ENCODE measurements at regions of chr13 and their contacts with region 1.

Region 1: DNA sequence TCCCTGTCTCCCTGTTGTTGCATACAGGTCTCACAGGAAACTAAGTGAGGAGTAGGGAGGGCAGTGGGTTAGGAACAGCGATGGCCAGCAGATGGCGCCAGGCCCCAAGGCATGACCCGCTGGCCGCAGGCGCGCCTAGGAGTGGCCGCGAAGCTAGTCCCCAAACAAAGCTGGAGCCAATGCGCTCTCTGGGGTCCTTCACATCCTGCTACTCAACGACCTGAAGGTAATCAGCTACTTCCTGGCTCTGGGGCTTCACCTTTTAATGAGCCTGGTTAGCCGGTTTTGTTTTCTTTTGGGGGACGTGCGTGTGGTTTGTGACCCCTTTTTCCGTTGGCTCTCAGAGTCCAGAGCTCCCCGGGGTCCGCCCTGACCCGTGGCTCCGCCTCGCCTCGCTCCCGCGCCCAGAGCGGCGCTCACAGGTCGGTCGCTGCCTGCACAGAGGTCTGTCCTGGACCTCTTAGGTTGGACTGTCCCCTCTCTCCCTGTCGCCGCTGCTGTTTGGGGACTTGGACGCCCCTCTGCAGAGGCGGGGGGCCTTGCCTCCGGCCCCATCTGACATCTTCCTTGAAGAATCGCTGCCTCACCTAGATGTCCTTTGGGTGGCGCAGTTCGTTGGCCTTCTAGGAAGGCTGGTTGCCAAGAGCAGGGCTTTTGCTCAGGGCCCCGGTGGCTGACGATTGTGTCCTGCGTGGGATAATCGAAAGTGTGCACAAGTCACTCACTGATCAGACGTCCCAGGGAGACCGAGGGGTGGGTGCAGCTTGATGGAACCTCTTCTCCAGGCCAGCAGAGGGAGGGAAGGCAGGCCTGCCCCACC is 62.1 kb upstream of the GTF3A start:
- DNase-seq: peak; percentile 68
- H3K4me3 ChIP-seq: peak overlapping the region; percentile 26 to 42 (median 42)
- H3K27ac ChIP-seq: no peak overlapping the region
- H3K4me1 ChIP-seq: peaks cover 5% of the 10 kb centered on the region
- H3K27me3 ChIP-seq: no peaks in the 10 kb centered on the region
- CTCF ChIP-seq: peak; percentile 91 to 95

Region 2: GRCh38 chr13:26707122-26708006 is 654.9 kb before region 1 on chr13:
- CTCF ChIA-PET with region 1: no interaction called
- dilution Hi-C with region 1: no loop called
- in situ Hi-C with region 1: no loop called
- intact Hi-C with region 1: loop called (anchors 10 kb)
- DNase-seq: peak; percentile 44
- H3K4me3 ChIP-seq: no peak overlapping the region
- H3K27ac ChIP-seq: no peak overlapping the region
- H3K4me1 ChIP-seq: no peaks in the 10 kb centered on the region
- H3K27me3 ChIP-seq: peaks cover 3% of the 10 kb centered on the region
- CTCF ChIP-seq: peak; percentile 59 to 88

Region 3: GRCh38 chr13:27171827-27172494 is 190.3 kb before region 1 on chr13:
- CTCF ChIA-PET with region 1: no interaction called
- dilution Hi-C with region 1: no loop called
- in situ Hi-C with region 1: no loop called
- intact Hi-C with region 1: loop called (anchors 10 kb)
- DNase-seq: peak; percentile 88
- H3K4me3 ChIP-seq: peak overlapping the region; percentile 61 to 76 (median 74)
- H3K27ac ChIP-seq: peak overlapping the region; percentile 54
- H3K4me1 ChIP-seq: peaks cover 15% of the 10 kb centered on the region
- H3K27me3 ChIP-seq: no peaks in the 10 kb centered on the region
- CTCF ChIP-seq: peak in 1 of 2 donors; percentile 22

Region 4: DNA sequence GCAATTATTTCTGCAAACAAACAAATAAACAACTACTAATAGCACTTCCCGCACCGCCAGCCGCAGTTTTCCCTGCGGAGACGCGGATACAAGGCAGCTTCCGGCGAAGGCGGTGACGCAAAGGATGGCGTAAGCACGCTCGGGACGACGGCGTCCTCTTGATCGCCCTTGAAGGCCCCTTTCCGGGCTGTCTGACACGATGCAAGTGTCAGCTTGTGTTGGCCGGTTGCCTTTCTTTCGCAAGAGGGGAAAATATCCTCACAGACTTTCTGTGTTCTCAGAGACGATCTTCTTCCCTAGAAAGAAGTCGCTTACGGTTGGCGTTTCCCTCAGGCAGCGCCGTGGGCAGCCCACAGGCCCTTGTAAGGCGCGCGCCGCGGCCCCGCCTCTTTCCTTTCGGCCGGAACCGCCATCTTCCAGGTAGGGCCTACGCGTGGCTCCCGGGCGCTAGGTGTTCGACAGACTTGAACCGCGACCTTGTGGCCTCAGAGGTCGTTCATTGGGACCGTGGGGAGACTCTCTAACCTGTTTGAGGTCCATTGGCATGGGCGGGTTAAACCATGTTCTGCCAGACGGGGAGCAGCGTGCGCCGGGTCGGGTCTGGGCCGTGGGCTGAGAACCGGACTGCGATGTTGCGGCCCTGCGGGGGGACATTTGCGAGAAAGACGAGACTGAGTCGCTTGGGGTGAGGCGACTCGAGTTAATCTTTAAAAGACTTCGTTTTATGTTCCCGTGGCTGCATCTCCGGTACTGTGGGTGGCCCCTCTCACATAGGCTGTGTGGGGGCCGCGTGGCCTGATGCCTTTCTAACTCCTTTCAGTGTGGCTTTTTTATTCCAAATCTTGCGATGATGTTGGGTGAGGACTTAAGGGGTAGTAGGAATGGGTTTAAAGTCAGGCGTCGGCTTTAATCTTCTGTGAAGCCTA is 110.8 kb before region 1 on chr13 and contains the start of gene RPL21:
- CTCF ChIA-PET with region 1: no interaction called
- dilution Hi-C with region 1: no loop called
- in situ Hi-C with region 1: no loop called
- intact Hi-C with region 1: loop called (anchors 5 kb)
- DNase-seq: peak; percentile 88
- H3K4me3 ChIP-seq: peak within 1 kb of the TSS; percentile 77 to 97 (median 84)
- H3K27ac ChIP-seq: peak within 1 kb of the TSS; percentile 94
- H3K4me1 ChIP-seq: peaks cover 9% of the 10 kb centered on the region
- H3K27me3 ChIP-seq: no peaks in the 10 kb centered on the region
- CTCF ChIP-seq: no peak
- total RNA-seq, gene RPL21: 422 to 818 TPM

Region 5: GRCh38 chr13:27658546-27658945 is 296.3 kb after region 1 on chr13:
- CTCF ChIA-PET with region 1: no interaction called
- dilution Hi-C with region 1: no loop called
- in situ Hi-C with region 1: no loop called
- intact Hi-C with region 1: no loop called
- DNase-seq: no peak
- H3K4me3 ChIP-seq: no peak overlapping the region
- H3K27ac ChIP-seq: no peak overlapping the region
- H3K4me1 ChIP-seq: peaks cover 19% of the 10 kb centered on the region
- H3K27me3 ChIP-seq: no peaks in the 10 kb centered on the region
- CTCF ChIP-seq: no peak

Region 6: DNA sequence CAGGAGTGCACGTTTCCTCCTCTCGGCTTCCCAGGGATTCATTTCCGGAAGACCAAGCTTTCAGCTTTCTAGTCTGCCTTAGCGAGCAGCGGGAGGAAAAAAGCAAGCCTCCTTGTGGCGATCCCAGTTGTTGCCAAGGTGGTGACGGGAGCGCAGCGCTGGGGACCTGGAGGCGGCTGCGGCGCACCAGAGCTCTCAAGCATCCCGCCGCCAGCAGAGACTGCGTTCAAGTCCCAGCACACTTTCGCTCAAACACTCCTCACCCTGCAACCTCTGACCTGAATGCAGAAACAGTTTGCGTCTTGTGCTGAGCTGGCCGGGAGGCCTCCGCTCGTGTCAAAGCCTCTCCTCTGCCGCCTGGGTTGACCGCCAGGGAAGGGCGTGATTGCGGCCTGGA is 435.0 kb after region 1 on chr13:
- CTCF ChIA-PET with region 1: no interaction called
- dilution Hi-C with region 1: no loop called
- in situ Hi-C with region 1: no loop called
- intact Hi-C with region 1: no loop called
- DNase-seq: peak; percentile 50
- H3K4me3 ChIP-seq: no peak overlapping the region
- H3K27ac ChIP-seq: no peak overlapping the region
- H3K4me1 ChIP-seq: peaks cover 4% of the 10 kb centered on the region
- H3K27me3 ChIP-seq: peaks cover 46% of the 10 kb centered on the region
- CTCF ChIP-seq: peak in 1 of 2 donors; percentile 27

Region 7: GRCh38 chr13:27980280-27980998 is 618.2 kb after region 1 on chr13:
- CTCF ChIA-PET with region 1: interaction called, 6 read pairs
- dilution Hi-C with region 1: no loop called
- in situ Hi-C with region 1: no loop called
- intact Hi-C with region 1: loop called (anchors 1 kb)
- DNase-seq: no peak
- H3K4me3 ChIP-seq: no peak overlapping the region
- H3K27ac ChIP-seq: no peak overlapping the region
- H3K4me1 ChIP-seq: no peaks in the 10 kb centered on the region
- H3K27me3 ChIP-seq: peaks cover 62% of the 10 kb centered on the region
- CTCF ChIP-seq: no peak